Aorta (tissue), 5 donors: ENCODE measurements at regions of chr12 and their contacts with region 1.

Region 1: GRCh38 chr12:2057041-2057794 is 4.4 kb downstream of the CACNA1C start:
- DNase-seq: peak; percentile 73 to 88
- ATAC-seq: peak; percentile 37
- H3K4me3 ChIP-seq: no peak overlapping the region
- H3K27ac ChIP-seq: peak overlapping the region; percentile 3 to 15
- H3K4me1 ChIP-seq: no peaks in the 10 kb centered on the region
- H3K27me3 ChIP-seq: no peaks in the 10 kb centered on the region

Region 2: DNA sequence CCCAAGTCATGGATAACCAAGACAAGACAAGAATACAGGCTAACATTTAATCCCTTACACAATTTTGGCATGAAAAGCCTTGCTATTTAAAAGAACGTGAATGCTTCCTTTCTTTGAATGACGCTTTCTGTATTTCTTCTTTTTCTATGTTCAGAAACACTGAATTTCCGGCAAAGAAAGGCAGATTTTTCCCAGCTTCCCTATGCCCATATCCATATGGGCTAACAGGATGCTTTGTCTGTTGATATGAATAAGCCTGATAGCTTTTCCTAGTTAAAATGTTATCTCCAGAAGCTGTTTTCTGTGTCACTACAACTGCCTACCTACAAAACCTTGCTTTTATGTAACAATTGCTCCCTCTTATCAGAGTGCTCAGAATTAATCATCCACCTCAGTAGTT is 100.5 kb before region 1 on chr12:
- intact Hi-C with region 1: no loop called
- DNase-seq: no peak
- ATAC-seq: no peak
- H3K4me3 ChIP-seq: no peak overlapping the region
- H3K27ac ChIP-seq: no peak overlapping the region
- H3K4me1 ChIP-seq: no peaks in the 10 kb centered on the region
- H3K27me3 ChIP-seq: no peaks in the 10 kb centered on the region

Region 3: GRCh38 chr12:1978078-1978862 is 78.9 kb before region 1 on chr12:
- intact Hi-C with region 1: no loop called
- DNase-seq: no peak
- ATAC-seq: no peak
- H3K4me3 ChIP-seq: no peak overlapping the region
- H3K27ac ChIP-seq: no peak overlapping the region
- H3K4me1 ChIP-seq: peaks cover 1 to 10% of the 10 kb centered on the region in 2 donors
- H3K27me3 ChIP-seq: no peaks in the 10 kb centered on the region

Region 4: GRCh38 chr12:2013527-2014223 is 43.5 kb before region 1 on chr12:
- intact Hi-C with region 1: no loop called
- DNase-seq: no peak
- ATAC-seq: peak; percentile 67
- H3K4me3 ChIP-seq: no peak overlapping the region
- H3K27ac ChIP-seq: no peak overlapping the region
- H3K4me1 ChIP-seq: no peaks in the 10 kb centered on the region
- H3K27me3 ChIP-seq: no peaks in the 10 kb centered on the region

Region 5: GRCh38 chr12:2273288-2273687 is 216.1 kb after region 1 on chr12:
- intact Hi-C with region 1: loop called (anchors 5 kb)
- DNase-seq: peak; percentile 82 to 85
- ATAC-seq: peak; percentile 84
- H3K4me3 ChIP-seq: no peak overlapping the region
- H3K27ac ChIP-seq: no peak overlapping the region
- H3K4me1 ChIP-seq: peaks cover 0 to 6% of the 10 kb centered on the region in 2 donors
- H3K27me3 ChIP-seq: no peaks in the 10 kb centered on the region